ENCODE measurements at regions of chr4 and their contacts with region 1.

Region 1: DNA sequence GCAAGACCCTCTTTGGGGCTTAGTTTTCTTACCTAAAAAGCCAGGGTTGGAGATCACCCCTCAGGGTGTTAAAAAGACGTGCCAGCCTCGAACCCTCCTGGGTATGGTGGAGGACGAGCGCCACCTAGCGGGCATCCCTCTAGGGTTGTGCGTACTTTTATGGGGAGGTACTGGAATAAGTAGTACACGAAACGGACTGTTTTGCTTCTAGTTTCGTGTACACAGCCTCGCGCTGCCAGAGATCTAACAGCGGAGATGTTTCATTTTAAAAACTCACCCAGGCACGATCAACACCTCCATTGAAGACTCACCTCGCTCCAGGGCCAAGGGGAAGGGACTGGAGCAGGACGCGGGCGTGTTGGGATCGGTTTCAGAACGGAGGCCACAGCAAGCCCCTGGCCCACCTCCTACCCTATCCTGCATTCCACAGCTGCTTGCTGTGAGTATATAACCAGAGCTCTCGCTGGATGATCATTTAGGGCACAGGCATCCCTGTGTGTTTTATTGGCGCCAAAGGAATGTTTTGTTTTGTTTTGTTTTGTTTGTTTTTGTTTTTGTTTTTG is 4.8 kb upstream of the NKX3-2 start:
- DNase-seq: peak; percentile 72
- H3K4me3 Mint-ChIP-seq: peak overlapping the region; percentile 28
- H3K27ac Mint-ChIP-seq: peak overlapping the region; percentile 25
- H3K4me1 Mint-ChIP-seq: peaks cover 29% of the 10 kb centered on the region
- H3K27me3 Mint-ChIP-seq: peaks cover 61% of the 10 kb centered on the region

Region 2: DNA sequence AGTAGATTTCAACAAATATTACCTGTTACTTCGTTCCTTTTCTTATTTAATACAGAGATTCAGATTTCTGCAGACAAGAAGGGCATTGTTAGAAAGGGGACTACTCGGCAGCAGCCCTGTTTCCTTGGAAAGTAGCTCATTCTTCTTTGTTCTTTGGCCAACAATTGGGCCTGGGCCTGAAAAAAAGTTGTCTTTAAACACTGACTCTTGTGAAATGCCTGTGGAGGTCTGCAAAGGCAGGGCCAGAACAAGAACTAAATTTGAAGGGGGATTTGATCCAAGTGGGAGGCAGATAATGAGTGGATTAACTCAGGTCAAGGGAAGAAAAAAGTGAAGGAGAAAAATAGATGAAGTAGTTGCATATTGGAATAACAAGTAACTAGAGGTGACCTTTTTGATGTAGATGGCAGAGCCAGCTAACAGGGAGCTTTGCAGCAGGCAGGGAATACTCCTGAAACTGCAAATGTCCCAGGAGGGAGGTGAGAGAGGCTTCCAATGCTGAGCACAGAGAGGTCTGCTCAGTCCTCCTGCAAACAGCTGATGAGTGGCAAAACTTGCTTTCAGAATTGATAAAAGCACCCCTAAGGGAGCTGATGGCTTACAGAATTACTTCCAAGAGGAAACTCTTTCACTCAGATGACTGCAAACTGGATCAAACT is 1727.2 kb before region 1 on chr4:
- intact Hi-C with region 1: no loop called
- DNase-seq: no peak
- H3K4me3 Mint-ChIP-seq: no peak overlapping the region
- H3K27ac Mint-ChIP-seq: no peak overlapping the region
- H3K4me1 Mint-ChIP-seq: no peaks in the 10 kb centered on the region
- H3K27me3 Mint-ChIP-seq: no peaks in the 10 kb centered on the region

Region 3: DNA sequence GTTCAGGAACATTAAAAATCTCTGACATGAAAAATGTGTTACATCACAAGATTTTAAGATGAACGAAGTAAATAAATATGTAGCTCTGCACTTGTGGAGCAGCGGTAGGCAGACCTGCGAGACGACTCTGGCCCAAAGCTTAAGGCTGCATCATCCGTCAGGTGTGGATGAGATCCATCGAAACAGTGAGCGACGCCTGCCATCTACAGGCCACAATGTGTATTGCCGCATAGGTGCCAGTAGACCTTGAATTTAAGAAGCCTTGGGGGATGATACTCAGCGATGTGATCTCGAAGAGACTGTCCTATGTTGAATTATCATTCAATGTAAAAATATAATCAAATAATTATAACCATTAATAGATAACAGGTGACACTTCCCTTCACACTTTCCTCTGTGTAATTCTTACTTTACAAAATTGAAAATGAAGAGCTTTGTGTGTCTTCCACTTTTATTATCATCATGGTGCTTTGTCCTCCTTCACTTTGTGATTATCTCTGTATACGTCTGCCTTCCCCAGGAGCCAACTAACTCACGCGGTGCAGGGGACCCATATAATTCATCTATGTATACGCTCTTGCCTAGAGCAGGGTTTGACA is 915.9 kb before region 1 on chr4:
- intact Hi-C with region 1: loop called (anchors 2 kb)
- DNase-seq: peak; percentile 51
- H3K4me3 Mint-ChIP-seq: no peak overlapping the region
- H3K27ac Mint-ChIP-seq: no peak overlapping the region
- H3K4me1 Mint-ChIP-seq: no peaks in the 10 kb centered on the region
- H3K27me3 Mint-ChIP-seq: no peaks in the 10 kb centered on the region

Region 4: DNA sequence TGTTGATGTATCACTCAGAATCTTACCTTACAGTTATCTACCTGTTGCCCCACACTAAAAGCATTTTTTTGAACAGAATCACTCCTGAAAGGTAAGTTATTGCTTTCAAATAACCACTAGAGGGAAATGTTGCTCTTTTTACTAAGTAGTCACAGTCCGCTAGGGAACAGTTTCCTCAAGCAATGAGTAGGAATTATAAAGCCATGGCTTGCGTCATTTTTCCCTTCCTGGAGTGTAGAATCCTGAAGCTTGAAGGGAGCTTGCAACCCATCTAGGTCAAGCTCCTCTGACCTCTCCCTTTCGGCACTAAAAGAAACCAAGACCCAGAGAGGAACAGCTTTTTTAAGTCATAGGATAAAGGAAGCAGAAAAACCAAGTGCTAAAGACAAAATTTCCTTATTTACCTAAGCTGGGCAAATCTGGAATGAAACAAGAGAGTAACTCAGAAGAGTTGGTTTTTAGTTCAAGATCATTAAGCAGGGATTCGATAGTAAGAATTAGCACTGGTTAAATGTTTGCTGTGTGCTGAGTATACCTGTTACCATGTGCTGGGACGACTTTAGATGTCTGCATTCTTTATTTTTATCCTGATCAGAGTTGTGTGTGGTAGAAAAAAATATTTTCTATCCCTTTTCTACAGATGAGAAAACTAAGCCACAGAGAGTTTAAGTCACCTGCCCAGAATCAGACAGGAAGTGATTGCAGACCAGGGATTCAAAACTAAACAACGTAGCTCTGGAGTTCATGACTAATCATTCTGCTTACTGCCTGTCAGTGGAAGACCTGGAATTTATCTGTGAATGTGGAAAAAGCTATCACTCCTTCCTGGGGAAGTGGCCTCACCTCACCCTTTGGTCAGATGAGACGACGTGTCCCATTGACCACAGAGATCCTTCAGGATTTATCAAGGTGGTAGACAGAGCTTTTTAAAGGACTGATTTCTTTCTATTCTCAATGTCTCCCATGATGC is 696.4 kb before region 1 on chr4:
- intact Hi-C with region 1: loop called (anchors 1 kb)
- DNase-seq: no peak
- H3K4me3 Mint-ChIP-seq: no peak overlapping the region
- H3K27ac Mint-ChIP-seq: no peak overlapping the region
- H3K4me1 Mint-ChIP-seq: no peaks in the 10 kb centered on the region
- H3K27me3 Mint-ChIP-seq: no peaks in the 10 kb centered on the region

Region 5: GRCh38 chr4:13484122-13484748 is 64.8 kb before region 1 on chr4 and contains the start of gene RAB28:
- intact Hi-C with region 1: loop called (anchors 2 kb)
- DNase-seq: peak; percentile 90
- H3K4me3 Mint-ChIP-seq: peak within 1 kb of the TSS; percentile 91
- H3K27ac Mint-ChIP-seq: peak within 1 kb of the TSS; percentile 96
- H3K4me1 Mint-ChIP-seq: peaks cover 26% of the 10 kb centered on the region
- H3K27me3 Mint-ChIP-seq: peaks cover 16% of the 10 kb centered on the region
- total RNA-seq, gene RAB28: 19.3 and 22.2 TPM in 2 replicates

Region 6: DNA sequence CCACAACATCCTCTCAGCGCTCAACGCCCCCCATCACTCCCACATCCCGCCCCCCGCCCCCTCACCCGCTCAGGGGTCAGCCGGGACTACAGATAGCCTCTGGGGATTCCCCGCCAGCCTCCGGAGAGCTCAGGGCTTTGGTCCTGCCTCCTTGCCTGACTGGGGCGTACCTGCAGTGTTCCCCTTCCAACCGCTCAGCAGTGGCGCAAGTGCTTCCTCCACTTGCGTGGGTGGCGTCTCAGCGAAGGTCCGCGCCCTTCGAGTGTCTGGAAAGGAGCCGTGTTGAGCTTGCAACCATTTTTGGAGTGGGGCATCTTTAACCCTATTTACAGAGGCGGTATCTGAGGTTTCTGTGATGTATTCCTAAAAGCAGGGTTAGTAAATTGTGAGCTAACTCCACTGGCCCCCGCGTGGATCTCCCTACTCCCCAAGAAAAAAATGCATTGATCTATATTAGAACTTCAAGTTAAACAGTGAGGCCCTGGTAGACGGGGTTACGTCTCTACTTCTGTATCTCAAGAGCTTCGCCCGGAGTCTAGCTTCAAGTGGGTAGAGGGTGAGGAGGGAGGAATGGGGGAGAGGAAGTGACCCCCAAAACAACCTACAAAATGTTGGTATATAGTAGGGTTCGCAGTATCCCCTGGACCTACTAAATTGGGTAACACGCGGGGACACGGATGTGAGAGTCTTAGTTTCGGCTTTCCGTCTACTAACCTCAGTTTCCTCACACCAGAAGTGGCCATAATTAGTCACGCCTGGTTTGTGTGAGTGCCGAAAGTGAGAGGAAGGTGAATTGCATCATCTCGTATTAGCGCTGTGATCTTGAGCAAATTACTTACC is 20.9 kb before region 1 on chr4:
- intact Hi-C with region 1: loop called (anchors 1 kb)
- DNase-seq: no peak
- H3K4me3 Mint-ChIP-seq: no peak overlapping the region
- H3K27ac Mint-ChIP-seq: no peak overlapping the region
- H3K4me1 Mint-ChIP-seq: peaks cover 3% of the 10 kb centered on the region
- H3K27me3 Mint-ChIP-seq: peaks cover 84% of the 10 kb centered on the region

Measured in activated T-helper 1 cell treated with anti-CD3 and anti-CD28 coated beads, Interleukin-12 subunit alpha, Interleukin-12 subunit beta, Interleukin-2, Interleukin-4 antibody, amounts not matched to agents 30 ng/mL and 10 ng/mL and 1 ng/mL, durations not matched to agents 14 hours and 24 hours and 36 hours (primary cell).